SK-N-SH (cell line): ENCODE measurements at regions of chr15 and their contacts with region 1.

Region 1: GRCh38 chr15:74202452-74203428 is at the start of gene STRA6:
- DNase-seq: peak; percentile 90
- H3K4me3 ChIP-seq: peak within 1 kb of the TSS; percentile 18 to 50; a peak in 3 of 4 replicates
- H3K27ac ChIP-seq: peak within 1 kb of the TSS; percentile 80 to 97
- H3K4me1 ChIP-seq: peaks cover 64 to 95% of the 10 kb centered on the region in 2 experiments
- H3K27me3 ChIP-seq: no peaks in the 10 kb centered on the region
- CTCF ChIP-seq: peak; percentile 35
- EP300 ChIP-seq: peak; percentile 17 to 48; a peak in 1 of 4 replicates
- RAD21 ChIP-seq: peak; percentile 45; the same call in 1 of the 2 replicates
- polyA plus RNA-seq, gene STRA6: 27.9 and 31.0 TPM in 2 replicates

Region 2: DNA sequence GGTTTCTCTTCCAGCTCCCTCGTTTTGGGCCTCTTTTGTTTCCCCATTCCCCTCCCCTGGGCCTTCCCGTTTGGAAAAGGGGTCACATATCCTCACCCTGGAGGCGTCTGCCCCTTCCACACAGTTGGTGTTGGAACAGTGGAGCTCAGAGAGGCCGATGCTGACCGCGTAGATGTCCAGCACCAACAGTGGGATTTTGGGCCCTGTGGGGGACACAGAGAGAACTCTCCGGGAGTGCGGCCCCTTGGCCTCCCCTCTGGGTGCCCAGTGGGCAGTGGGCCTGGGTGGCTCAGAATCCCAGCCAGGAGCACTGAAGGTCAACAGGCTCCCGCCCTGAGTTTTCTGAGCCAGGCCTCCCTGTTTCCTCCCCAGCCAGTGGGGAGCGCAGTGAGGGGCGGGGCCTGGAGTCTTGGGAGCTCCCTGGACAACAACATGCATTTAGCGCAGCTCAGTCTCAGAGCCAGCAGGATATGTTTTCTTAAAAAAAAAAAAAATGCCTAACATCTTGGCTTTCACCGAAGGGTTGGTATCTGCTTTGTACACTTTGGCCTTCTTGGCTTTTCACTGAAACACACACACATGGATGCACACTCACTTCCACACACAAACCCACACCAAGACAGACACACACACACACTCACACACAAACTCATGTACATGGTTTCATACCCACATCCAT is 29.9 kb before region 1 on chr15:
- CTCF ChIA-PET with region 1: interaction called, 3 read pairs
- POLR2A ChIA-PET with region 1: interaction called, 10 read pairs
- DNase-seq: peak; percentile 61
- H3K4me3 ChIP-seq: no peak overlapping the region
- H3K27ac ChIP-seq: peak overlapping the region in 1 of 2 experiments; percentile 86; a peak in 3 of 4 replicates
- H3K4me1 ChIP-seq: peaks cover 26 to 68% of the 10 kb centered on the region in 2 experiments; a peak in 3 of 4 replicates
- H3K27me3 ChIP-seq: no peaks in the 10 kb centered on the region
- CTCF ChIP-seq: no peak
- EP300 ChIP-seq: no peak
- RAD21 ChIP-seq: no peak

Region 3: GRCh38 chr15:74222240-74223119 is 19.7 kb after region 1 on chr15:
- CTCF ChIA-PET with region 1: interaction called, 59 read pairs
- POLR2A ChIA-PET with region 1: interaction called, 19 read pairs
- DNase-seq: peak; percentile 55
- H3K4me3 ChIP-seq: no peak overlapping the region
- H3K27ac ChIP-seq: peak overlapping the region in 1 of 2 experiments; percentile 100; a peak in 2 of 4 replicates
- H3K4me1 ChIP-seq: peaks cover 27 to 71% of the 10 kb centered on the region in 2 experiments
- H3K27me3 ChIP-seq: no peaks in the 10 kb centered on the region
- CTCF ChIP-seq: no peak
- EP300 ChIP-seq: no peak
- RAD21 ChIP-seq: no peak

Region 4: DNA sequence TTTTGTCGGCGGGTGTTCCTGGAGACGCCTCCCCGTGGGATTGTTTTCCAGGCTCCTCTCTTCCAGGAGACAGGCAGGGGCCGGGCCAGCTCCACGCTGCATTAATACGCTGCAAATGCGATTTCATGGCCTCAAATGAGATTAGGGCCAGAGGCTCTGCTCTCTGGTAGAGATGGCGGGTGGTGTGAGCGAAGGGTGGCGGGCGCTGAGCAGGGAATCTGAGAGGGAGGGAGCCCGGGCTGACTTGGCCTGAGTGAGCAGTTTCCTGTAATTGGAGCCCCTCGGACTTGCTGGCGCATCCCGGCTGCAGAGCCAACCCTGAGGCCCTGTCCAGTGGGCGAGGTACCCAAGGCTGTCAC is 26.0 kb after region 1 on chr15:
- CTCF ChIA-PET with region 1: interaction called, 59 read pairs
- POLR2A ChIA-PET with region 1: interaction called, 19 read pairs
- DNase-seq: peak; percentile 87
- H3K4me3 ChIP-seq: no peak overlapping the region
- H3K27ac ChIP-seq: peak overlapping the region; percentile 72 to 100
- H3K4me1 ChIP-seq: peaks cover 35 to 84% of the 10 kb centered on the region in 2 experiments
- H3K27me3 ChIP-seq: no peaks in the 10 kb centered on the region
- CTCF ChIP-seq: no peak
- EP300 ChIP-seq: peak in 1 of 2 experiments; percentile 91; a peak in 3 of 4 replicates
- RAD21 ChIP-seq: peak; percentile 46

Region 5: GRCh38 chr15:74302821-74303359 is 100.2 kb after region 1 on chr15:
- CTCF ChIA-PET with region 1: interaction called, 85 read pairs
- POLR2A ChIA-PET with region 1: interaction called, 9 read pairs
- DNase-seq: peak; percentile 93
- H3K4me3 ChIP-seq: no peak overlapping the region; a peak in 1 of 4 replicates
- H3K27ac ChIP-seq: peak overlapping the region in 1 of 2 experiments; percentile 95; a peak in 2 of 4 replicates
- H3K4me1 ChIP-seq: peaks cover 0 to 50% of the 10 kb centered on the region in 2 experiments; a peak in 2 of 4 replicates
- H3K27me3 ChIP-seq: no peaks in the 10 kb centered on the region
- CTCF ChIP-seq: peak; percentile 77
- EP300 ChIP-seq: peak in 1 of 2 experiments; percentile 90; a peak in 2 of 4 replicates
- RAD21 ChIP-seq: peak; percentile 87

Region 6: DNA sequence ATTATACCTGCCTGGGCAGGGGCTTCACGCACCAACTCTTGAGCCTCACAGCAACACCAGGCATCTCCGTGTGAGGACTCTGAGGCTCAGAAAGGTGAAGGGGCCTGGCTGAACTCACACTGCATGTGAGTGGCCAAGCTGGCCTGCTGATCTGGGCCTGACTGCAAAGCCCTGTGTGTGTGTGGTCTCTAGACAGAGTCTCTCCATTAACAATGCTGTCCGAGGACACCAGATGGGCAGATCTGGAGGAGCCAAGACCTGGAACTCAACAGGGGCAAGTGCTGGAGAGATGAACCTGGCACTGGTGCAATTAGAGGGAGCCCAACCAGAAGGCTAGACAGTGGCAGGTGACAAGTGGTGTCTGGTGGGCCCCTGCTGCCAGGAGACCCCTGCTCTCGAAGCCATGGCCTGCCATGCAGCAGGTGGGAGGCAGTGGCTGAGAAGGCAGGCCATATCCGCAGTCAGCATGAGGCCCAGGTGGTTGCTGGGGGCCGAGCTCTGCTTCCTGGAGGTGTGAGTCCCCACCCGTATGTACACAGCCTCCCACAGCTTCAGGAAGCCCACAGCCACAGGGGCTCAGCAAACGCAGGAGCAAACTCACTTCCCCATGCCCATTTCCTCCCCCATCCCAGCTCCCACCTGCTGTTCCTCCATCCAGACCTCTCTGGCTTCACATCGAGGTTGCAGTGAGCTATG is 125.7 kb after region 1 on chr15:
- CTCF ChIA-PET with region 1: no interaction called
- POLR2A ChIA-PET with region 1: no interaction called
- DNase-seq: no peak
- H3K4me3 ChIP-seq: no peak overlapping the region
- H3K27ac ChIP-seq: no peak overlapping the region
- H3K4me1 ChIP-seq: peaks cover 0 to 7% of the 10 kb centered on the region in 2 experiments; a peak in 1 of 4 replicates
- H3K27me3 ChIP-seq: no peaks in the 10 kb centered on the region
- CTCF ChIP-seq: no peak
- EP300 ChIP-seq: no peak
- RAD21 ChIP-seq: no peak

Region 7: GRCh38 chr15:74350295-74351290 is 147.9 kb after region 1 on chr15:
- CTCF ChIA-PET with region 1: no interaction called
- POLR2A ChIA-PET with region 1: no interaction called
- DNase-seq: no peak
- H3K4me3 ChIP-seq: no peak overlapping the region
- H3K27ac ChIP-seq: no peak overlapping the region
- H3K4me1 ChIP-seq: no peaks in the 10 kb centered on the region
- H3K27me3 ChIP-seq: peaks cover 14% of the 10 kb centered on the region; the same call in 1 of the 2 replicates
- CTCF ChIP-seq: no peak
- EP300 ChIP-seq: no peak
- RAD21 ChIP-seq: no peak

Region 8: DNA sequence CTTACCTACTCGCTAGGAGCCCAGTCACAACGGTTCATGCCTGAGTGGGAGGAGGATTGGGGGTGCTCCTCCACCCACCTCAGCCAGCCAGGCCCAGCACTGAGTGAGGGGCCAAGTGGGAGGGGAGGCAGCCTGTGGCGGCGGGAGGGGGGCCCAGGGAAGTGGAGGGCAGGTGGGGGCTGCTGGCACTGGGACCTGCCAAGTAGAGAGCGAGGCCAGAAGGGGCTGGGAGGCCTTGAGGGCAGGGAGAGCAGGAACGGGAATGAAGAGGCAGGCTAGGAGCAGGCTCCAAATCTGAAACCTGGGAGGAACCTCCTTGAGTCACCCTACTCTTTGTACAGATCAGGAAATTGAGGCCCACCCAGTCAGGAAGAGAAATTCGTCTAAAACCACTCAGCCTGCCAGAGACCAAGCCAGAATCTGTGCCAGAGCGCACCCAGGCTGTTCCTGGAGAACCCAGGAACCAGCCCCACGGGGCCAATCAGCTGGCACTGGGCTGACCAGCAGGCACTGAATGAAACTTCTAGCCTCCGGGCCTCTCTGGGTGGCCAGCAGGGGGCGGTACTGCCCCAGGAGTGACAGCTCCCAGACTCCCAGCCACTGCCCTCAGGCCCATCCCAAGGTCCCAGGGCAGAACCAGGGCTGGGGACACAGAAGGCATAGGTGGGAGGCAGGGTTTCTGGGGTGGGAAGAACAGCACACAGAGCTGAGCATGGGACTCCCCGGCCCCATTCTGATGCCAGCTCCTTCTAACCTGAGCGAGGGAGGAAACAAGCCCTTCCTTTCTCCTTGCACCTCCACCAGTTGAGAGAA is 179.5 kb after region 1 on chr15:
- CTCF ChIA-PET with region 1: no interaction called
- POLR2A ChIA-PET with region 1: no interaction called
- DNase-seq: peak; percentile 91
- H3K4me3 ChIP-seq: peak overlapping the region in 1 of 2 experiments; percentile 22; a peak in 1 of 4 replicates
- H3K27ac ChIP-seq: no peak overlapping the region
- H3K4me1 ChIP-seq: peaks cover 0 to 14% of the 10 kb centered on the region in 2 experiments; a peak in 1 of 4 replicates
- H3K27me3 ChIP-seq: no peaks in the 10 kb centered on the region
- CTCF ChIP-seq: peak; percentile 95
- EP300 ChIP-seq: no peak
- RAD21 ChIP-seq: peak; percentile 91

Region 9: GRCh38 chr15:74525946-74526345 is 323.2 kb after region 1 on chr15:
- CTCF ChIA-PET with region 1: no interaction called
- POLR2A ChIA-PET with region 1: no interaction called
- DNase-seq: no peak
- H3K4me3 ChIP-seq: no peak overlapping the region
- H3K27ac ChIP-seq: peak overlapping the region in 1 of 2 experiments; percentile 64; a peak in 2 of 4 replicates
- H3K4me1 ChIP-seq: peaks cover 0 to 13% of the 10 kb centered on the region in 2 experiments; a peak in 1 of 4 replicates
- H3K27me3 ChIP-seq: no peaks in the 10 kb centered on the region
- CTCF ChIP-seq: no peak
- EP300 ChIP-seq: peak in 1 of 2 experiments; percentile 57; a peak in 1 of 4 replicates
- RAD21 ChIP-seq: no peak